HCT116 (cell line): ENCODE measurements at regions of chrX and their contacts with region 1.

Region 1: DNA sequence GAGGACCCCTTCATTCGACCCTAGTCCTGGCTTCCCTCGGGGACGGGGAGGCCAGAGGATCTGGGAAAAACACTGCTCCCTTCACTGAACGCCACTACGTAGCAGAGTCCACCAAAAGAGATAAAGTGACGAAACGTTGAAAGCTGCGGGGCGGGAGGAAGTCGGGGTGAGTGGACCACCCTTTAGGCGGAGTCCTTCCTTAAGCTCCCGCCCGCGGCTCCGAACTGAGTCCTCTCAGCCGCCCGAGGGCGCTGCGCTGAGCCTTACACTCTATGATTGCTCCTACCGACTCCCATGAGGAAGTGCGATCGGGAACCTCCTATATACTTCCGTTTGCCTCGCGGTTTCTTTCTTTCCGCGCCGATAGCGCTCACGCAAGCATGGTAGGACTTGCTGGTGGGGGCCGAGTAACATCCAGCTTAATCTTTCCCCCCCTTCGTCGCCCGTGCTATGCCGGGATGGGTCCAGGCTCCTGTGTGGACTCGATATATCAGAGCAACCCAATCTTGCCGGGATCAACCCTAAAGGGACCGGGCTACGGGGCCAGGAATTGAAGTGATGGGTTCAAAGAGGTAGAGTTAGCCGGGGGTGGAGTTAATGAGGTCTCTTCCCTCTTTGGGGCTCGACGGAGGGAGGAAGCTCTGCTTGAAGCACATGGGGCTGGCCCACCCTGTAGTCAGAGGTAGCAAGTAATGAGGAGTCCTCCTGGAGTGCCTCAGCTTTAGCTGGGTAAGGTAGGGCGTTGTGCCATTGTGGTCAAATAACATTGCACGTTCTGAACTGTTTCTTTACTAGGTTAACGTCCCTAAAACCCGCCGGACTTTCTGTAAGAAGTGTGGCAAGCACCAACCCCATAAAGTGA is at the start of gene RPL36A:
- DNase-seq: peak; percentile 78
- ATAC-seq: peak; percentile 97
- H3K4me3 ChIP-seq: peak within 1 kb of the TSS; percentile 75 to 78
- H3K27ac ChIP-seq: peak within 1 kb of the TSS; percentile 79
- H3K4me1 ChIP-seq: peaks cover 0 to 15% of the 10 kb centered on the region in 2 experiments; a peak in 2 of 4 replicates
- H3K27me3 ChIP-seq: no peaks in the 10 kb centered on the region
- CTCF ChIP-seq: peak; percentile 44 to 73 (median 60); a peak in 5 of 6 replicates
- POLR2A ChIP-seq: peak; percentile 84
- RAD21 ChIP-seq: no peak
- total RNA-seq, gene RPL36A: 360 TPM

Region 2: DNA sequence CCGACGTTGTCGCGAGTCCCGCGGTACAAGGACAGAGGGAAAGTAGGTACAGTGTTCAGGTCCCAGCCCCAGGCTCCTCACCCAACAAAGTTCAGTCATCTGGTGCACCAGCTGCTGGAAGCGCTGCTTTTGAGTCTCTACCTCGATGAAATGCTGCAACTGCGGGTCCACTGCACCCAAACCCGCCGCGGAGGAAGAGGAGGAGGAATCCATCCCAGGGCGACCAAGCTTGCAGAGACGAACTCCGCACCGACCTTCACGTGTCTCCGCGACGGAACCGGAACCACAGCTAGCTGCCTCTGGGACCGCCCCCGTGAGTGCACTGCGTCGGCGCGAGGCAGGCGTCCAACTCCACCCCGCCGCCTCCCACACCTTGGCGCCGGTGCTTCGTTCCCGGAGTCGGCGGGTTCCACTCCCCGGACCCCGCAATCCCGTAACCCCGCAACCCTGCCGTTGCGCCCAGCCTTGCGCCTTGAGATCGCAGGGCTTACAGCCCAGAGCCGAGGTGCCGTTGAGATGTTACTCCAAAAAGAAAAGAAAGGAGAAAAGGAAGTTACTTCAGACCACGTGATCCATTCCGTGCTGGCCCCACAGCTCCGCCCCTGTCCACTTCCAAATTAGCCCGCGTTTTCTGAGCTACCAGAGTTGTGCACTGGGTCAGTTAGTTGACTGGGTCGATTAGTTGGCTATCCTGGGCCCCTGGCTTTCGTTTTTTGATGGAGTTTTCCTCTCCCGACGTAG is 42.3 kb before region 1 on chrX and contains the start of gene TIMM8A:
- CTCF ChIA-PET with region 1: no interaction called
- POLR2A ChIA-PET with region 1: interaction called, 17 read pairs
- RAD21 ChIA-PET with region 1: no interaction called
- intact Hi-C with region 1: no loop called
- DNase-seq: peak; percentile 24
- ATAC-seq: peak; percentile 96
- H3K4me3 ChIP-seq: peak within 1 kb of the TSS; percentile 73 to 81
- H3K27ac ChIP-seq: peak within 1 kb of the TSS; percentile 63
- H3K4me1 ChIP-seq: peaks cover 2 to 18% of the 10 kb centered on the region in 2 experiments; a peak in 2 of 4 replicates
- H3K27me3 ChIP-seq: no peaks in the 10 kb centered on the region
- CTCF ChIP-seq: no peak
- POLR2A ChIP-seq: no peak
- RAD21 ChIP-seq: no peak
- total RNA-seq, gene TIMM8A: 24.9 TPM

Region 3: GRCh38 chrX:101442085-101442484 is 51.2 kb after region 1 on chrX:
- CTCF ChIA-PET with region 1: no interaction called
- POLR2A ChIA-PET with region 1: no interaction called
- RAD21 ChIA-PET with region 1: no interaction called
- intact Hi-C with region 1: no loop called
- DNase-seq: no peak
- ATAC-seq: no peak
- H3K4me3 ChIP-seq: no peak overlapping the region
- H3K27ac ChIP-seq: no peak overlapping the region
- H3K4me1 ChIP-seq: no peaks in the 10 kb centered on the region
- H3K27me3 ChIP-seq: no peaks in the 10 kb centered on the region
- CTCF ChIP-seq: no peak
- POLR2A ChIP-seq: no peak
- RAD21 ChIP-seq: no peak